ENCODE measurements at regions of chr22 and their contacts with region 1.

Region 1: GRCh38 chr22:22838148-22838786 is 49.3 kb upstream of the IGLL5 start:
- DNase-seq: no peak
- H3K4me3 ChIP-seq: no peak overlapping the region
- H3K4me3 Mint-ChIP-seq: peak overlapping the region in 2 of 7 donors; percentile 27 to 38
- H3K27ac ChIP-seq: no peak overlapping the region
- H3K27ac Mint-ChIP-seq: peak overlapping the region in 6 of 8 donors; percentile 35 to 77 (median 62)
- H3K4me1 ChIP-seq: peaks cover 12% of the 10 kb centered on the region
- H3K4me1 Mint-ChIP-seq: peaks cover 30 to 49% (median 34%) of the 10 kb centered on the region in 3 donors
- H3K27me3 ChIP-seq: no peaks in the 10 kb centered on the region
- H3K27me3 Mint-ChIP-seq: peaks cover 0 to 3% of the 10 kb centered on the region in 2 donors

Region 2: GRCh38 chr22:22848364-22848866 is 10.1 kb after region 1 on chr22:
- CTCF ChIA-PET with region 1: interaction called, 13 read pairs
- POLR2A ChIA-PET with region 1: no interaction called
- DNase-seq: peak; percentile 49 to 83 (median 59)
- H3K4me3 ChIP-seq: no peak overlapping the region
- H3K4me3 Mint-ChIP-seq: peak overlapping the region in 3 of 7 donors; percentile 27 to 74 (median 38)
- H3K27ac ChIP-seq: no peak overlapping the region
- H3K27ac Mint-ChIP-seq: peak overlapping the region in 4 of 8 donors; percentile 47 to 67 (median 66)
- H3K4me1 ChIP-seq: peaks cover 10% of the 10 kb centered on the region
- H3K4me1 Mint-ChIP-seq: peaks cover 56 to 67% (median 65%) of the 10 kb centered on the region in 3 donors
- H3K27me3 ChIP-seq: no peaks in the 10 kb centered on the region
- H3K27me3 Mint-ChIP-seq: no peaks in the 10 kb centered on the region